ENCODE measurements at regions of chr6 and their contacts with region 1.

Region 1: DNA sequence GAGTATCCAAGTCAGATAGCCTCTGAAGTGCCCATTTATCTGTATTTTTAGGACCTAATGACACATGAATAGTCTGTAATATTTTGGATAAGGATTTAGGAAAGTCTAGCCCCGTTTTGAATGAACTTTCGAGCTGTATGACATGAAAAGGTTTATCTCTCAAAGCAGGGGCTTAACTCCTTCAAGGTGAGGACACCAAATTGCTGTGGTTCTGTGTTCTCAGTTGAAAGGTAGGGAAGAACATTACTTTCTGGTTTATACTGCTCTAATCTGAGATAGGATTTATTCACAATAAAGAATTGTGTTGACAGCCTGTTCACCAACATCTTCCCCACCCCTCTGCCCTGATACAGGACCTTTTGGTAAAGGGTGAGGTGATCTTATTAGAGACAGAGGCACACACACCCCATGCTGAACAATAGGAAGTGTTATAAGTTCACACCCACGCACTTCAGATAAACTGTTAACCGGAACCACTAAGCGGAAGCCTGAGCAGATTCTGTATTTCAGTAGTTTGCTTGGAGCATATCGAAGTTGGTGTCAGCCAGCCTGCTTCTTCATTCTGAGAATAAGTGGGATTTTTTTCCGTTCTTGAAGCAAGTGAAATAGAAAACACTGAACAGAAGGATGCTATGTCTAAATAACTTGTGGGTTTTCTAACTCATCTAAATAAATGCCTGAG is 223.3 kb downstream of the TMEM242 start:
- DNase-seq: peak; percentile 74
- H3K4me3 Mint-ChIP-seq: peak overlapping the region; percentile 20
- H3K27ac Mint-ChIP-seq: peak overlapping the region; percentile 69
- H3K4me1 Mint-ChIP-seq: peaks cover 60% of the 10 kb centered on the region
- H3K27me3 Mint-ChIP-seq: no peaks in the 10 kb centered on the region

Region 2: DNA sequence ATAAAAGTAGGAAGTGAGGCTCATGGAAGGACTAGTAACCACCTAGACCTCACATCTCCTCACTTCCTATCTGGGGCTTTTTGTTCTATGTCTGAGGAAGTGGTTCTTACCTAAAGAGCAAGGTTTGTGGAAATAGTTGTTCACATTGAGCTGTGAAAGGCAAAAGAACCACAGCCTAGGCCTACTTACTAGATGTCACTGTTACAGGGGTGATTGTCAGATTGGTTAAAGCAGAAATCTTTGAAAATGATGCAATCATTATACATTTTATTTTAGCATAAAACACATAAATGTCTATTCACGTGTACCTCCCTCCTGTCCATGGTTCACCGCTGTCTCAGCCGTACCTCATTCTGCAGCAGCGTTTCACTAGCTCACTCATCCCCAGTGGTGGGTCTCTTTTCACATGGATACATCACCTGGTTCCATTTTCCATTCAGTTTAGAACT is 45.5 kb before region 1 on chr6:
- CTCF ChIA-PET with region 1: interaction called, 4 read pairs
- POLR2A ChIA-PET with region 1: no interaction called
- intact Hi-C with region 1: loop called (anchors 1 kb)
- DNase-seq: peak; percentile 59
- H3K4me3 Mint-ChIP-seq: no peak overlapping the region
- H3K27ac Mint-ChIP-seq: peak overlapping the region; percentile 91
- H3K4me1 Mint-ChIP-seq: peaks cover 39% of the 10 kb centered on the region
- H3K27me3 Mint-ChIP-seq: no peaks in the 10 kb centered on the region

Region 3: GRCh38 chr6:157068691-157069324 is 31.2 kb before region 1 on chr6:
- CTCF ChIA-PET with region 1: no interaction called
- POLR2A ChIA-PET with region 1: no interaction called
- intact Hi-C with region 1: loop called (anchors 1 kb)
- DNase-seq: no peak
- H3K4me3 Mint-ChIP-seq: peak overlapping the region; percentile 18
- H3K27ac Mint-ChIP-seq: peak overlapping the region; percentile 49
- H3K4me1 Mint-ChIP-seq: peaks cover 47% of the 10 kb centered on the region
- H3K27me3 Mint-ChIP-seq: no peaks in the 10 kb centered on the region

Region 4: DNA sequence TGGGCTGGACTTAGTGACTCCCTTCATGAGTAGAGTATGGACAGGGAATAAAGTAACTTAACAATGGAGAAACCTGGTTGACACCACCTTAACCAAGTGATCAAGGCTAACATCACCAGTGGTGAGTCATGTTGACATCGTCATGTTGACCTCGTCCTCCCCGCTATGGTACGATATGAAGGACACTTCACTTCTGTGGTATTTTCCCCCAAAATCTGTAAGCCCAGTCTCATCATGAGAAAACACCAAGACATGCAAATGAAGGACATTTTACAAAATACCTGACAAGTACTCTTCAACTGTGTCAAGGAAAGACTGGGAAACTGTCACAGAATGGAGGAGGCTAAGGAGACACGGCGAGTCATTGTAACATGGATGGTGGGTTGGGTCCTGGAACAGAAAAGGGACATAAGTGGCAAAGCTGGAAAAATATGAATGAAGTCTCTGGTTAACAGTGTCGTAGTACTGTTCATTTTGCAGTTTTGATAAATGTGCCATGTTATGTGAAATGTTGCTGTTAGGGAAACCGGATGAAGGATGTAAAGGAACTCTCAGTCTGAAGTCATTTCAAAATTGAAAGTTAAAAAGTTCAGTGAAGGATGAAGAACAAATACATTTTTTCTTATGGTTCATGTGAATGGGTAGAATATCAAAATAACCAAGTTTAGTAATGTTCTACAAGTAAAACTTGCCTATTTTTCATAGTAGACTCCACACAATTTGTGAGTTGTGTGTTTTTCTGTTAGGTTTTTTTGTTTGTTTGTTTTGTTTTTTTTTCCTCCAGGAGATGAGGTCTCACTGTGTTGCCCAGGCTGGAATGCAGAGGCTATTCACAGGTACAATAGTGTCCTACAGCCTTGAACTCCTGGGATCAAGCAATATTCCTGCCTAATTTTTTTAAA is 24.3 kb before region 1 on chr6:
- CTCF ChIA-PET with region 1: no interaction called
- POLR2A ChIA-PET with region 1: interaction called, 3 read pairs
- intact Hi-C with region 1: loop called (anchors 1 kb)
- DNase-seq: peak; percentile 55
- H3K4me3 Mint-ChIP-seq: peak overlapping the region; percentile 71
- H3K27ac Mint-ChIP-seq: peak overlapping the region; percentile 91
- H3K4me1 Mint-ChIP-seq: peaks cover 41% of the 10 kb centered on the region
- H3K27me3 Mint-ChIP-seq: no peaks in the 10 kb centered on the region

Region 5: DNA sequence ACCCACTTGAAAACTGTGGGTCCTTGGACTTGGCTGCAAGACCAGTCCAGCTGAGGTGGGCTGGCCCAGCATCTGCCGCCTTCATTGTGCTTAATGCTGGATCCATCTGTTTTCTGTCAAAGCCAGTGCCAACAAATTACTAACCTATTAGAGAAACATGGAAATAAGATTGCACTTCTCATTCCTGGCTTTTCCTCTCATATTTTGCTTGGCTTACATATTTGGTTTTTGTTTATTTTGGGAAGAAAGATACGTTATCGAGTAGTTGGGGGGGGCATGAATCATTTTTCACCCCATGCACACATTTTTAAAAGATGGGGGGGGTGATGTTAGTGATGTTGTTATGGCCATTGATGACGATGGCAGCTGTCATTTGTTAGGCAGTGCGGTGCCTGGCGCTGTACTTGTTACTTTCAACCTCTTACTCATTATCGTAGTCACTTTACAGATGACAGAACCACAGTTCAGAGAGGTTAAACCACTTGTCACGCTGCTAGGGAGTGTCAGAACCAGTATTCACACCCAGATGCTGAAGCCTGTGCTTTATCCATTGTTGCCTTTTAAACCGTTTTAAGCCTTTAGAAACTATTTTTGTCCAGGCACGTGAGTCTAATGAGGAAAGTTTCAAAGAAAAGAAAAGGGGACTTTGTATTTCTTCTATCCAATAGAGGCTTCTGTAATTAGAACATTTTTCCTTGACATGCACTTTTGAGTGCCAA is 43.3 kb after region 1 on chr6:
- CTCF ChIA-PET with region 1: no interaction called
- POLR2A ChIA-PET with region 1: no interaction called
- intact Hi-C with region 1: loop called (anchors 2 kb)
- DNase-seq: peak; percentile 65
- H3K4me3 Mint-ChIP-seq: no peak overlapping the region
- H3K27ac Mint-ChIP-seq: no peak overlapping the region
- H3K4me1 Mint-ChIP-seq: peaks cover 18% of the 10 kb centered on the region
- H3K27me3 Mint-ChIP-seq: no peaks in the 10 kb centered on the region

Region 6: DNA sequence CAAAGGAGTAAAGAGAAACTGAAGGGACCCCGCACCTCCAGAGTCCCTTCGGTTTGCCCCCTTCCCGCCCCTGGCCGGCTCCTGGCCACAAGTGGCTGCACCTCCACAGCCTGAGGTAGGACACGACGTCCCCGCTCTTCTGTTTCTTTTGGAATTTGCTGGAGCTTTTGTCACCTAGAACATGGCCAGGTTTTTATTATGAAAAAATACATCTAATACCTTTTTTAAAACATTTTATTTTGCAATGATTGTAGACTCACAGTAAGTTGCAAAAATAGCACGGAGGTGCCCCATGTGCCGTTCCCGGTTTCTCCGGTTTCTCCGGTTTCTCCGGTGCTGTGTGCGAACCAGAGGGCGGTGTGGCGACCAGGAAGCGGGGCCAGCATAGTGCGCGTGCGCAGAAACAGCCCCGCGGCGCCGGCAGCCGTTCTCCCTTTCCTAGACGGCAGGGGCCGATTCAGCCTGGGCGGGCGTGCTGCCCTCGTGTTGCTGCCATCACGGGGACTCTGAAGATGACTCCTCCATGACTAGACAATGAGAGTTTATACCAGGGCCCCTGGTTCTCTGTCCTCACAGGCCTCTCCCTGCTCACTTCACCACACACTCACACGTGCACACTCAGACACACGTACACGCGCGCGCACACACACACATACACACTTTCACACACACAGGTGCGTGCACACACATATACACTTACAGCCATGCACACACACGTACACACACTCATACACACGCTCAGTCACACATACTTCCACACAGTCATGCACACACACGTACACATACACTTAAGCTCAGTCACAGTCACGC is 121.2 kb after region 1 on chr6:
- CTCF ChIA-PET with region 1: no interaction called
- POLR2A ChIA-PET with region 1: no interaction called
- intact Hi-C with region 1: loop called (anchors 5 kb)
- DNase-seq: peak; percentile 92
- H3K4me3 Mint-ChIP-seq: peak overlapping the region; percentile 65
- H3K27ac Mint-ChIP-seq: peak overlapping the region; percentile 64
- H3K4me1 Mint-ChIP-seq: peaks cover 32% of the 10 kb centered on the region
- H3K27me3 Mint-ChIP-seq: no peaks in the 10 kb centered on the region

Measured in activated CD4-positive, alpha-beta memory T cell treated with anti-CD3 and anti-CD28 coated beads for 36 hours (primary cell).